B cell (primary cell): ENCODE measurements at regions of chr11 and their contacts with region 1.

Region 1: DNA sequence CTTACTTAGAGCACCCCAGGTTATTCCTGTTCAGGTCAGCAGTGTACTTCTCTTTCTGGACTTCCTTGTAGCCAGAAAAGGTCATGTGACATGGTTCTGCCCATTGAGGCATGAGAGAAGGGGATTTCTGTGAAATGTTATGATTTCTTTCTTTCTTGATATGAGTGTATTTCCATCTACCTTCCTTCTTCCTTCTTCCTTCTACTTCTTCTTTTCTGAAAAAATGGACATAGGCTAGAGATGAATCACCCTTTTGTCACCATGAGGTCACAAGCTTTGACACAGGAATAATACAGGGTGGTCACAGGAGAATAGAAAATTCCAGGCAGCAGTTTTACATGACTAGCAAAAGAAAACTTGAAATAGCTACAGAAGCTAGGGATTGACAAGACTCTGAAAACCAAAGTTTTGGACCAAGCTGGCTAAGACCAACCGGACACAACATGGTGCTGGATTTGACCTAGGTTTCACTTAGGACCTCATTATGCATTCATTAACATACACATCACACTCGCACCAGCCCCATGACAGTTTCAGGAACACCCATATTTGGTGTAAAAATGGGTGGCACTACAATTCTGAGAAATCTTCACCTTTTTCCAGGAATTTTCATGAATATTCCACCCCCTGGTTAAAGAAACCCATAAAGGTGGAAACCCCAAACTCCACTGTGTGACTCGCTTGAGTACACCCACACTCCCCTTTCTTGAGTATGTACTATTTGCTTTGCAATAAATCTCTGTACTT is 21.2 kb upstream of the MAP6 start:
- DNase-seq: peak; percentile 86
- ATAC-seq: peak; percentile 91
- H3K4me3 ChIP-seq: peak overlapping the region in 1 of 5 experiments; percentile 17
- H3K4me3 Mint-ChIP-seq: peak overlapping the region; percentile 72
- H3K27ac ChIP-seq: peak overlapping the region; percentile 79 to 80
- H3K27ac Mint-ChIP-seq: peak overlapping the region; percentile 92
- H3K4me1 ChIP-seq: peaks cover 27% of the 10 kb centered on the region in 2 donors
- H3K4me1 Mint-ChIP-seq: peaks cover 33% of the 10 kb centered on the region
- H3K27me3 ChIP-seq: peaks cover 0 to 2% (median 0%) of the 10 kb centered on the region in 4 experiments
- H3K27me3 Mint-ChIP-seq: peaks cover under 1% of the 10 kb centered on the region
- CTCF ChIP-seq: no peak

Region 2: DNA sequence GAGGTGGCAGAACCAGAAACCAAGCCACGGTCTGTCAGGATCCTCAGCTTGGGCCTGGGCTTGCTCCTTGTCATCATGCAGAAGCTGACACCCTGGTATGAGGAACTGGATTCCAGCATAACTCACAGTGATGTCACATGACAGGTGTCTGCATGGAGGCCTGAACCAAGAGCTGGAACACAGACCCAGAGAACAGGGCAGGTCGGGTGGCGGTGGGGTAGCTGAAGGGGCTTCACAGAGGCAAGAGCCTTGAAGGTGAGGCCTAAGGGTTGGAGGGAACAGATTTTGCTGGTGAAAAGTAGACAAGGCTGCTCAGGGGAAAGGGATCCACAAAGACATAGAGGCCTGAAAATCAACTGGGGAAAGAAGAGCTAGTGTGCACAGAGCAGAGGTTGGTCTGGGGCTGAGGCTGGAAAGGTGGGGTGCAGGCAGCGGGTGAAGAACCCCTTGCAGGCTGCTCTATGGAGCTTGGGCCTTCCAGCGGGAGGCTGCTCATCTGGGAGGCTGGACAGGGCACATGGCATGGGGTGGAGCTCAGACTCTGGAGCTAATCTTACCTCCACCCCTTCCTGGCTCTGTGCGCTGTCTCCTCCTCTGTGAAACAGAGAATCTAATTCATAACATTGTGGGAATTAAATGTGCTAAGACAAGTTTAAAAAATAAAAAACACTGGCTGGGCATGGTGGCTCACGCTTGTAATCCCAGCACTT is 309.2 kb before region 1 on chr11:
- CTCF ChIA-PET with region 1: no interaction called
- POLR2A ChIA-PET with region 1: no interaction called
- intact Hi-C with region 1: no loop called
- DNase-seq: no peak
- ATAC-seq: no peak
- H3K4me3 ChIP-seq: no peak overlapping the region
- H3K4me3 Mint-ChIP-seq: no peak overlapping the region
- H3K27ac ChIP-seq: no peak overlapping the region
- H3K27ac Mint-ChIP-seq: no peak overlapping the region
- H3K4me1 ChIP-seq: peaks cover 0 to 2% of the 10 kb centered on the region in 2 donors
- H3K4me1 Mint-ChIP-seq: peaks cover 2% of the 10 kb centered on the region
- H3K27me3 ChIP-seq: no peaks in the 10 kb centered on the region
- H3K27me3 Mint-ChIP-seq: peaks cover 6% of the 10 kb centered on the region
- CTCF ChIP-seq: no peak

Region 3: DNA sequence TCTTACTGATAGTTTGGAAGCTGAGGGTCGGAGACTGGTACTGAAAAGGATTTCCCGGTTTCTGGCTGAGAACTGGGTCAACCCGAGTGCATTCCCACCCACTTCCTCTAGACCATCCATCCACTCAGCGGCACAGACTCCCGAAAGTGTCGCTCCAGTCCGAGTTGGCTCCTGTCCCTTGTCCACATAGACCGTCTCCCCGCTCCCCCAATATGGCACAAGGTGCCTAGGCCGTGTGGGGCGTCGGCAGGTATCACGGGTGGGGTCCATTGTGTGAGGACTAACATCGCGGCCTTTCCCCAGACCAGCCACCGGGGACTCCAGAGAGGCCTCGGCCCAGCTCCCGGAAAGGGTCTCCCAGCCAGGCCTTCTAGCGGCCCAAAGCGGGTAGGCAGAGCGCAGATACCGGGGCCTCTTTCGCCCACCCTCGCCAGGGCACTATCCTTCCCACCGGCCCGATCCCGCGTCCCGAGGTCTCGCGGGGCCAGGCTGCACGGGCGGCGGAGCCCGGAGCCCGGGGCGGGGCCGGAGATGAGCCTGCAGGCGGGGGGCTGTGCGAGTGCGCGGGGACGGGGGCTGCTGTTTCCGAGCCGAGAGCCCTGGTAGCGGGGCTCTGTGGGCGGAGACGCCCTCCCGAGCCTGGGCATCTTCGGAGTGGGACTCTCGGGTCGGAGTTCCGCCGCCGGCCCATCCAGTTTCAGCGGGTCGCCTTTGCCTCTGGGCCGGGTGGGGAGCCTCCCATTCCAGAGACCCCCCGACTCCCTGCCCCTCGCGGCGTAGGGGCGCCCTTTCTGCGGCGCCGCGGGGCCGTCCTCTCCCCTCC is 106.9 kb before region 1 on chr11:
- CTCF ChIA-PET with region 1: no interaction called
- POLR2A ChIA-PET with region 1: no interaction called
- intact Hi-C with region 1: loop called (anchors 5 kb)
- DNase-seq: peak; percentile 72
- ATAC-seq: peak; percentile 80
- H3K4me3 ChIP-seq: peak overlapping the region; percentile 27 to 69 (median 60)
- H3K4me3 Mint-ChIP-seq: peak overlapping the region; percentile 91
- H3K27ac ChIP-seq: peak overlapping the region; percentile 42 to 60
- H3K27ac Mint-ChIP-seq: peak overlapping the region; percentile 89
- H3K4me1 ChIP-seq: peaks cover 27 to 29% of the 10 kb centered on the region in 2 donors
- H3K4me1 Mint-ChIP-seq: peaks cover 28% of the 10 kb centered on the region
- H3K27me3 ChIP-seq: no peaks in the 10 kb centered on the region
- H3K27me3 Mint-ChIP-seq: no peaks in the 10 kb centered on the region
- CTCF ChIP-seq: no peak

Region 4: GRCh38 chr11:75667831-75668450 is 22.1 kb before region 1 on chr11:
- CTCF ChIA-PET with region 1: no interaction called
- POLR2A ChIA-PET with region 1: no interaction called
- intact Hi-C with region 1: loop called (anchors 2 kb)
- DNase-seq: peak; percentile 70
- ATAC-seq: peak; percentile 49
- H3K4me3 ChIP-seq: peak overlapping the region in 4 of 5 experiments; percentile 34 to 76 (median 50)
- H3K4me3 Mint-ChIP-seq: peak overlapping the region; percentile 94
- H3K27ac ChIP-seq: no peak overlapping the region
- H3K27ac Mint-ChIP-seq: peak overlapping the region; percentile 47
- H3K4me1 ChIP-seq: peaks cover 16 to 22% of the 10 kb centered on the region in 2 donors
- H3K4me1 Mint-ChIP-seq: peaks cover 13% of the 10 kb centered on the region
- H3K27me3 ChIP-seq: peaks cover 0 to 61% (median 48%) of the 10 kb centered on the region in 4 experiments
- H3K27me3 Mint-ChIP-seq: peaks cover 71% of the 10 kb centered on the region
- CTCF ChIP-seq: no peak